GM10248 (cell line): ENCODE measurements at regions of chr2 and their contacts with region 1.

Region 1: GRCh38 chr2:37890893-37891495 is 34.1 kb upstream of the RMDN2 start:
- DNase-seq: peak; percentile 68
- CTCF ChIP-seq: peak; percentile 76

Region 2: GRCh38 chr2:37907501-37908225 is 16.7 kb after region 1 on chr2:
- CTCF ChIA-PET with region 1: interaction called, 15 read pairs
- POLR2A ChIA-PET with region 1: interaction called, 5 read pairs
- DNase-seq: no peak
- CTCF ChIP-seq: no peak

Region 3: GRCh38 chr2:38122344-38122743 is 231.3 kb after region 1 on chr2:
- CTCF ChIA-PET with region 1: no interaction called
- POLR2A ChIA-PET with region 1: no interaction called
- DNase-seq: no peak
- CTCF ChIP-seq: no peak

Region 4: DNA sequence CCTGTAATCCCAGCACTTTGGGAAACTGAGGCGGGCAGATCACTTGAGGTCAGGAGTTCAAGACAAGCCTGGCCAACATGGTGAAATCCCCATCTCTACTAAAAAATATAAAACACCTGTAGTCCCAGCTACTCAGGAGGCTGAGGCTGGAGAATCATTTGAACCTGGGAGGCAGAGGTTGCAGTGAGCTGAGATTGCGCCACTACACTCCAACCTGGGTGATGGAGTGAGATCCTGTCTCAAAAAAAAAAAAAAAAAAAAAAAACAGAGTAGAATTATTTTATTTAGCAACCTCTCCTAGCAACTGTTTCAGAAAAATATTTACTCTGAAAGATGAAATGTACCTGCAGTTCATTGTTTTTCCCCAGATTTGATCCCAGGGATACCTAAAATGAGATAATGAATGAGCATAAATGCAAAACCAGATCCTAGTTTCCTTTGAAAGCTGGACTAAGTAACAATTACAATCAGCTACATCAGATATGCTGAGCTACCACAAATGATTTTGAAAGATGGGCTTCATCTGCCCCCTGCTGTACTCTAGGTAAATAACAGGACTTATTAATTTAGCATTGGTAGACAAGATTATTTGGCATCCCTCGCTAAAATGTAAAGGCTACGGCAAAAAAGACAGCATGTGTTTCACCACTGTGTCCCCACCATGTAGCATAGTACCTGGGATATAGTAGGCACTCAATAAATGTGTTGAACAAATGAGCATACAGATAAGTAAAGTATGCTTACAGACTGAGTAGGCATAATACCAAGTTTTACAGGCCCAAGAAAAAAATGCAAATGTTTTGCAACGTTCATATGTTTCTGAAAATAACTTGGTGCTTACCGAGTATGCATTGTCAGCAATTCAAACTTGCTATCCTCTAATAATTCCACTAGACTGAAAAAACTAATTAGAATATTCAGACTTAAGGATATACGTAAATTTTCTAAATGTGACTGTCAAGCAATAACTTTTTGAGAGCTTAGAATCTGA is 383.6 kb after region 1 on chr2:
- CTCF ChIA-PET with region 1: interaction called, 12 read pairs
- POLR2A ChIA-PET with region 1: no interaction called
- DNase-seq: peak; percentile 65
- CTCF ChIP-seq: peak; percentile 65